ENCODE measurements at regions of chr18 and their contacts with region 1.

Region 1: DNA sequence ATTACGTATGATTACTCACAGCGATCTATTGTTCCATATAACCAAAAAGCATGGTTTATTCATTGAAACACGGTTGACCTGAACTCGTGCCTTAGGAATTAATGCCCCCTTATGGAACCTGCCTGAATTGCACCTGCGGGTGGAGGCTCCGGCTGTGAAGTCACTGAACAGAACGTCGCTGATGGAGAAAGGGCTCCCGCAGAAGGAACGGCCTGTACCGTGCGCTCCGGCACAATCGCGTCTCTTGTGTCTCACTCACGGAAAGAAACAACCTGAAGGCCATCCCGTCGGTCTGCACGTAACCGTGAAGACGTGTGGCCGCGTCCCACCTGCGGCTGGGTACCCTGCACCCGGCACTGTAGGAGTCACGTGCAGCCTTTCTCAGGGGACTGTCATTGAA is 133.1 kb downstream of the NFATC1 start:
- DNase-seq: peak; percentile 54
- H3K4me3 ChIP-seq: no peak overlapping the region
- H3K27ac ChIP-seq: no peak overlapping the region
- H3K4me1 ChIP-seq: peaks cover 25% of the 10 kb centered on the region
- H3K27me3 ChIP-seq: peaks cover 19% of the 10 kb centered on the region
- CTCF ChIP-seq: peak; percentile 95

Region 2: DNA sequence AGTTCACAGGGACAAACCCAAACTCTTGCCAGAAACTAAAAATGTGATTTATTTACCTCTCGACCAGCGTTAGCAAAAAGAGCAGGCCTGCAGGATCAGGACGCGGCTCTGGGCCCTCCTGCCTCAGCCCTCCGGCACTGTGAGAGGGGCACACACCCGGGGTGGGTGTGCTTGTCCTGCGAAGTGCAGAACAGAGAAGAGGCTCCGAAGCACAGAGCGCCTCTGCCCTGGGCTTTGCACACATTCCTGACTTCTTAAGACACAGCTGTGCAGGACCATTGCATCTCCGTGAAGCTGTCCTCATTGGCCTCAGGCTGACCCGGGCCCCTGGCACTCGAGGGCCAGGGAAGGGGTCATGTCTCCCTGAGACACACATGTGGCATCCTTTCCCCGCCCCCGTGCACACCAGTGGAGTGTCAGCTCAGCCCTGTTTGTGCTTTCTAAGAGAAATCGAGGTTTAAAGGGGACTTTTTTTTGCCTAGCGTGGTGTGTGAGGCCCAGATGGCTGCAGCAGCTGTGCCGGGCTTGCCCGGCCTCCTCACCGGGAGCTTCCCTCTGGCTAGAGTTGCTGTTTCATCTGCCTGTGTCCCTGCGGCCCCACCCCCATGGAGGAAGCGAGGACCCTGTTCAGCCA is 143.0 kb before region 1 on chr18:
- intact Hi-C with region 1: loop called (anchors 5 kb)
- DNase-seq: no peak
- H3K4me3 ChIP-seq: no peak overlapping the region
- H3K27ac ChIP-seq: no peak overlapping the region
- H3K4me1 ChIP-seq: no peaks in the 10 kb centered on the region
- H3K27me3 ChIP-seq: peaks cover 48% of the 10 kb centered on the region
- CTCF ChIP-seq: no peak

Region 3: GRCh38 chr18:79644006-79644665 is 115.3 kb after region 1 on chr18:
- intact Hi-C with region 1: loop called (anchors 10 kb)
- DNase-seq: peak; percentile 60
- H3K4me3 ChIP-seq: no peak overlapping the region
- H3K27ac ChIP-seq: no peak overlapping the region
- H3K4me1 ChIP-seq: peaks cover 5% of the 10 kb centered on the region
- H3K27me3 ChIP-seq: peaks cover 45% of the 10 kb centered on the region
- CTCF ChIP-seq: peak; percentile 98

Measured in left ventricle myocardium inferior (tissue), 1 donor.